ENCODE measurements at regions of chr4 and their contacts with region 1.

Region 1: DNA sequence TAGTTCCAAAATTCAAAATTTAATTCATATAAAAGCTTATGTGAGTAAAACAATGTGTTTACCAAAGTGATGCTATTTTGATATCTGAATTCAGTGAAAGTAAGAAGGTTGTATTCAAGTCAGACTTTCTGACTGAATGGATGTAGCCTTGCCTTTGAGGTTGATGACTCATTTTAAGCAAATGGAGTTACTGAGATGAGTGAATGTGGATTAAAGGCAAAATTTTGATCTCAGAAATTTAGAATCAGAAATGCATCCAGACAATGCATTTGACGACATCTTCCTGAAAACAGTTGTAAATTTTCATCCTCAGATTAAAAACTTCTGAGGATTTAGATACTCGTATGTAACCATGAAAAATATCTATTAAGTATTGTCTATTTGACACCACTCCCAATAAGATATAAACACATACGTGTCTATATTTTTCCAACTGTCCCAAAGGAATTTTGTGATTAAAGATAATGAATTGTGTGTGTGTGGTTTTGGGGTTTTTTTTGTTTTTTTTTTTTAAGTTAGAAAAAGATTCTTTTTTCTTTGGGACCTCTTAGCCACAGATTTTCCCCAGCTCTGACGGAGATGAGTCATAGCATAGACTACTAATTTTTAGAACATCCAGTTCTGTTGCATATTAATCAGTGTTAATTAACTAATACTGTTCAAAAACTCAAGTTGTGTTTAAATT is 34.4 kb downstream of the NFKB1 start:
- DNase-seq: no peak
- H3K4me3 Mint-ChIP-seq: peak overlapping the region; percentile 20
- H3K27ac Mint-ChIP-seq: peak overlapping the region; percentile 37
- H3K4me1 Mint-ChIP-seq: peaks cover 40% of the 10 kb centered on the region
- H3K27me3 Mint-ChIP-seq: no peaks in the 10 kb centered on the region

Region 2: DNA sequence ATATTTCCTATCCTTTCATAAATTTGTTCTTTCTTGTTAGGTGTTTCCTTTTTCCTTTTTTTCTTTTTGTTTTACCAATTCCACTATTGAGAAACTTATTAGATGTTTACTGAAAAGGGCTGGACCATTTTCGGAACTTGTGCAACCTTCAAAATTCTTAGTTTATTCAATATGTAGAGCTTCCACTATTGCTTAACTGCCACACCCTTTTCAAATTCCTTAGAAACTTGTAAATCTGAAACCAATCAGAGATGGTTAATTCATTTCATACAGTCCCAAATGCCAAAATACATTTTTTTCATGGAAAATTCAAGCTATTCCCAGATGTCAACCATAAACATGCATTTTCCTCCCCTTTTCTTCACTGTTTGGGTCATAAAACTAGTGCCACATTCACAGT is 124.1 kb before region 1 on chr4:
- intact Hi-C with region 1: no loop called
- DNase-seq: peak; percentile 0
- H3K4me3 Mint-ChIP-seq: no peak overlapping the region
- H3K27ac Mint-ChIP-seq: no peak overlapping the region
- H3K4me1 Mint-ChIP-seq: no peaks in the 10 kb centered on the region
- H3K27me3 Mint-ChIP-seq: peaks cover 10% of the 10 kb centered on the region

Region 3: DNA sequence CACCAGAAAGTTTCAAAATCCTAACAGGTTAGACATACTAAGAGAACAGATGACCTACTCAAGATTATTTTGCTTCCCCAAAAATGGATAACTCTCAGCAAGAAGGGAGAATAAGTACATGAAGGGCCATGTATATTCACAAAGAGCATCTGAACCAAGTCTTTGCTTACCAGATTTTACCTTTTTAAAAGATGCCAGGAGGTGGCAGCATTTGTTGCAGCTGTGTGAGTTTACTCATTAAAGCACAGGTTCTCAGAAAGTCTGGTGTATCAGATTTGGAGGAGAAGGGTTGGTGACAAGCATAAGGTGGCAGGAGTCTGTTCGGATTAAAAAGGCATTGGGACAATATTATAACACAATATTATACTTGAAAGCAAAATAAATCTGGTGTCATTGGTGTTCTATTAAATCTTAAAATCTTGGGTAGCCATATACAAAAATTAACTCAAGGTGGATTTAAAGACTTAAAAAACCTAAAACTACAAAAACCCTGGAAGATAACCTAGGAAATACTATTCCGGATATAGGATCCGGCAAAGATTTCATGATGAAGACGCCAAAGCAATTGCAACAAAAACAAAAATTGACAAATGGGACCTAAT is 85.7 kb before region 1 on chr4:
- intact Hi-C with region 1: no loop called
- DNase-seq: peak; percentile 89
- H3K4me3 Mint-ChIP-seq: no peak overlapping the region
- H3K27ac Mint-ChIP-seq: no peak overlapping the region
- H3K4me1 Mint-ChIP-seq: peaks cover 42% of the 10 kb centered on the region
- H3K27me3 Mint-ChIP-seq: no peaks in the 10 kb centered on the region

Region 4: GRCh38 chr4:102500696-102501446 is 34.7 kb before region 1 on chr4 and contains the start of gene NFKB1:
- intact Hi-C with region 1: loop called (anchors 1 kb)
- DNase-seq: peak; percentile 95
- H3K4me3 Mint-ChIP-seq: peak within 1 kb of the TSS; percentile 95
- H3K27ac Mint-ChIP-seq: peak within 1 kb of the TSS; percentile 95
- H3K4me1 Mint-ChIP-seq: peaks cover 22% of the 10 kb centered on the region
- H3K27me3 Mint-ChIP-seq: no peaks in the 10 kb centered on the region
- total RNA-seq, gene NFKB1: 146 and 148 TPM in 2 replicates

Region 5: DNA sequence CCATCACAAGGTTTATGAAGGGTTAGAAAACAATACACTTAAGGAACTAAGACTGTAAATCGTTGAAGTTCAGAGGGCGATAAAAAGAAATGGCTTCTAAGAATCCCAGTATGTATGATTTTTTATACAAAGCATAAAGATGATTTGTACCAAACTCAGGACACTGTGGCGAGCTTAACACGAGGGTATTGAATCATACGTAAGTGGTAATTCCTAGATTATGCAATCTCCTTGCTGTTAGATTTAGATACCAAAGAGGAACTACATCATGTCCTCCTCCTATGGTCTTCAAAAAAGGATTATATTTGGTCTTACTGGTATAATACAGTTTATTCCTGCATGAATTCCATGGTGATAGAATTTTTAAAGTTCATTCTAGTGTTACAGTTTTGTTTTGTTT is 10.4 kb before region 1 on chr4:
- intact Hi-C with region 1: loop called (anchors 1 kb)
- DNase-seq: no peak
- H3K4me3 Mint-ChIP-seq: peak overlapping the region; percentile 44
- H3K27ac Mint-ChIP-seq: peak overlapping the region; percentile 42
- H3K4me1 Mint-ChIP-seq: peaks cover 78% of the 10 kb centered on the region
- H3K27me3 Mint-ChIP-seq: no peaks in the 10 kb centered on the region

Region 6: DNA sequence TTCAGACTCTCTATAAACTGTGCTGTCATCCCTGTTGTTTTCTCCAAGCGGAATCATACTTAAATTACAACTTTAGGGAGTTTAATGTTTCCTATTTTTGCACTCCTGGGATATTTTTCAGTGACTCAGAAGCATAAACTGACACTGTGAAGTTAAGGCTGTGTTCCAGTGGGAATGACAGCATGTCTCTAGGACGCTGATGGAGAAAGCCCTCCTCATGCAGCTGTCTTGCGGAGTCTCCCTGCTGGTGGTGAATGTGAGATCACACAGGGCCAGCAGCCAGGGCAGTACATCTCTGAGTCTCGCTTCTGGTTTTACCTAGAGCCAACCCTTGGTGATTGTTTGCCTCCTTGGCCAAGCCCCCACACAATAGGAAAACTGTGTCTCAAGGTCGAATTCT is 18.9 kb after region 1 on chr4:
- intact Hi-C with region 1: loop called (anchors 2 kb)
- DNase-seq: no peak
- H3K4me3 Mint-ChIP-seq: no peak overlapping the region
- H3K27ac Mint-ChIP-seq: no peak overlapping the region
- H3K4me1 Mint-ChIP-seq: peaks cover 46% of the 10 kb centered on the region
- H3K27me3 Mint-ChIP-seq: no peaks in the 10 kb centered on the region

Region 7: GRCh38 chr4:102564399-102565059 is 29.0 kb after region 1 on chr4:
- intact Hi-C with region 1: loop called (anchors 1 kb)
- DNase-seq: no peak
- H3K4me3 Mint-ChIP-seq: peak overlapping the region; percentile 12
- H3K27ac Mint-ChIP-seq: peak overlapping the region; percentile 65
- H3K4me1 Mint-ChIP-seq: peaks cover 66% of the 10 kb centered on the region
- H3K27me3 Mint-ChIP-seq: no peaks in the 10 kb centered on the region

Measured in activated CD4-positive, alpha-beta T cell treated with anti-CD3 and anti-CD28 coated beads, Interleukin-2, amount 10 ng/mL, durations not matched to agents 24 days and 14 days (primary cell).